ENCODE measurements at regions of chr21 and their contacts with region 1.

Region 1: GRCh38 chr21:36927719-36928117 is 38.8 kb downstream of the HLCS start:
- DNase-seq: peak; percentile 94
- H3K4me3 ChIP-seq: no peak overlapping the region
- CTCF ChIP-seq: peak; percentile 91

Region 2: GRCh38 chr21:36504067-36505058 is 423.4 kb before region 1 on chr21:
- CTCF ChIA-PET with region 1: interaction called, 23 read pairs
- POLR2A ChIA-PET with region 1: no interaction called
- DNase-seq: no peak
- H3K4me3 ChIP-seq: no peak overlapping the region
- CTCF ChIP-seq: peak; percentile 53

Region 3: GRCh38 chr21:36747815-36748383 is 179.8 kb before region 1 on chr21:
- CTCF ChIA-PET with region 1: interaction called, 10 read pairs
- POLR2A ChIA-PET with region 1: no interaction called
- DNase-seq: no peak
- H3K4me3 ChIP-seq: peak overlapping the region; percentile 49
- CTCF ChIP-seq: peak; percentile 53

Region 4: DNA sequence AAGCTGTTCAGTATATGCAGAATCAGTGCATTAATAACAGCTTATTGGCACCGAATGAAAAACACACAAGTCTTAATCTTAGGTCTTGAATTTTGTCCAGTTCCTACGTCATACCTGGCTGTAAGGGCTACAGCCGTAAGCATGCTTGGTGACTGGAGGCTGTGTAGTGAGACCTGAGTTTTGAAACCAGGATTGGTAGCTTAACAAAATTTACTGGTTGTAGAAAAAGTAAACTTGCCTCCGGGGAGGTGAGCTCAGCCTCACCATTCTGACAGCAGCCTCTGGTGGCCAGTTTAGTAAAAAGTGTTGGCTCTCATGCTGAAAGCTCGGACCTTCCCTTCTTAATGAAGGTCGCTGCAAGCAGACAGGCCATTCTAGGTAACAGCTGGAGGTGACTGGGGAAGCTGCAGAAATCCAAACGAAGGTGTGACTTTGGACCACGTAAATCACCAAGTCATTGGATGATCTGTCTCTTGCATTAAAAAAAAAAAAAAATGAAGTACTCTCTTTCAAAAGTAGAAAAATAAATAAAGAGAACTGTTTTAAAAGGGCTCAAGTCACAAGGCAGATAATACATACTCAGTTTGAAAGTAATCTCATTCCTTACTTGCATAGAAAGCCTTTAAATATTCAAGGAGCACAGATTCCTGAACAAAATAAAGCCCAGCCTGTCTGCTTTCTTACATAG is 10.1 kb before region 1 on chr21:
- CTCF ChIA-PET with region 1: interaction called, 28 read pairs
- POLR2A ChIA-PET with region 1: no interaction called
- DNase-seq: no peak
- H3K4me3 ChIP-seq: no peak overlapping the region
- CTCF ChIP-seq: peak; percentile 82

Region 5: DNA sequence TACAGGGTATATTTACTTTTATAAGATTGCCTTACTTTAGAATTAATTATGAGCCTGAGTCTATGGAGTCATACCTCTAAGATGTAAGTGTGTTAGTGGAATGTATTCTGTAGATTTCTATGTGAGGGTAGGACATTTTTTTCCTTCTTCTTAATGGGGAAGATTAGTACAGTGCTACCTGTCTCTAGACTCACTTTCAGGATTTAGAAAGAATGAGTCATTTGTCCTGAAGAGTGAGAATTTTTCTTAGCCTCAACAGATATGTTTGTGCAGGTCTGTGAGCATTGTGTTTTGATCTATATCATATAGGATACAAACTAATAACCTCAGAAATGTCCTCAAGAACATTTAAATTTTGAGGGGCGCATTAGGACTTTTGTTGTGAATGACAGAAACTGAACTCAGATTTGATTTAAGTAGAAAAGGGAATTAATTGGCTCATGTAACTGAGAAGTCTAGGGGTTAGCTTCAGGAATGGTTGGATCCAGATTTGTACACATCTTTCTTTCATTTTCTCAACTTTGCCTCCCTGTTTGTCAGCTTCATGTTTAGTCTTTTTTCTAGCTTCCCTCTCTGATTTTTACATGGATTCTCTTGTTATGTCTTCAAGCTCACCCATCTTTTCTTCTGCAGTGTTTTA is 190.6 kb after region 1 on chr21:
- CTCF ChIA-PET with region 1: no interaction called
- POLR2A ChIA-PET with region 1: no interaction called
- DNase-seq: no peak
- H3K4me3 ChIP-seq: no peak overlapping the region
- CTCF ChIP-seq: no peak